ENCODE measurements at regions of chrX and their contacts with region 1.

Region 1: DNA sequence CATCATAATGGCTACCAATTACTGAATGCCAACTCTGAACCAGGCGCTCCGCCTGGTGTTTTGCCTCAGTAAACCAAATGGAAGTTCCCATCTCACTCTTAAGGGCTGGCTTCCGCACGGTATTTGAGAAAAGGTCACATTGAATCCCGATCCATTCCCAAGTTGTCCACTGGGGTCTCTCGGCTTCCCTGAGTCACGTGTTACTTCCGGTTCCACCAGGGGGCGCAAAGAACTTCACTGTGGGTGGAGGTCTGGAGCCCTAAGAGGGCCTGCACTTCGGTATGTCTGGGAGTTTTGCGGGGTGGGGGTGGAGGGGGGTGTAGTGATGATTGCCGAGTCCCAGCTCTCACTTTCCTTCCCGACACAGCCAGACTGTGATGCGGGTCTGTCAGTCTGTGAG is 13.4 kb upstream of the NHS start:
- DNase-seq: peak in 1 of 5 donors; percentile 24
- H3K4me3 ChIP-seq: no peak overlapping the region
- H3K27ac ChIP-seq: no peak overlapping the region
- H3K4me1 ChIP-seq: no peaks in the 10 kb centered on the region
- H3K27me3 ChIP-seq: no peaks in the 10 kb centered on the region
- CTCF ChIP-seq: no peak
- EP300 ChIP-seq: no peak
- POLR2A ChIP-seq: no peak

Region 2: DNA sequence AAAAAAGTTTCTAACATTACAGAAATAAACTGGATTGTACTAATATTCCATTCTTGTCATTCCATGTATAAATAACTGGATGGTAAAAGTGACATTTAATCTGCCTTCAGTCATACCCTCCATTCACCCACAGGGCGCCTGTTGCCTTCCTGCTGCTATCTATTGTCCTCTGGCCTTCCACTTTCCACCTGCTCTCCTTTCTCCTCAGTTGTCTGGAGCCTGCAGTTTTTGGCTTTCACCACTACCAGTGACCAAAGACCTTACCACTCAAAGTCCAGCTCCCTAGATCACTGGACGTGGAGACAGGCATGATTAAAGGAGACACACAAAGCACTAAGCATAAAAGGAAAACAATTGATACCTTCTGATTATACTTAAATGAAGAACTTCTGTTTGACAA is 32.8 kb before region 1 on chrX:
- intact Hi-C with region 1: no loop called
- DNase-seq: no peak
- H3K4me3 ChIP-seq: no peak overlapping the region
- H3K27ac ChIP-seq: no peak overlapping the region
- H3K4me1 ChIP-seq: no peaks in the 10 kb centered on the region
- H3K27me3 ChIP-seq: no peaks in the 10 kb centered on the region
- CTCF ChIP-seq: no peak
- EP300 ChIP-seq: no peak
- POLR2A ChIP-seq: no peak

Region 3: GRCh38 chrX:17413228-17413627 is 51.6 kb after region 1 on chrX:
- intact Hi-C with region 1: no loop called
- DNase-seq: no peak
- H3K4me3 ChIP-seq: no peak overlapping the region
- H3K27ac ChIP-seq: no peak overlapping the region
- H3K4me1 ChIP-seq: no peaks in the 10 kb centered on the region
- H3K27me3 ChIP-seq: no peaks in the 10 kb centered on the region
- CTCF ChIP-seq: no peak
- EP300 ChIP-seq: no peak
- POLR2A ChIP-seq: no peak

Region 4: DNA sequence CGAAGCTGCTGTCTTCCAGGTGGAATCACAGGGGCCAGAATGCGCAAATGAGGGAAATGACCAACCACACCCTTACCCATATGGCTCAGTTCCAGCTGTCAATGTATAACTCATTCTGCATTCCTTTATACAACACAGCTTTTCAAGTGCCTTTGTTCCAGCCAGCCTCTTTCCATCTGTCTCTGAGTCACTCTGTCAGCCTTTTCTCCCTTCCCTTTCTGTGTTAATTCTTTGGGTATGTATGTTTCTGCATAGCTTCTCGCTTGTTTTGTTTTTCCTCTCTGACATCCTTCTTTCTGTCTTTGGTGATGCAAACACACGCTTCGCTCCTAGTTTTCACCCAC is 1255.8 kb after region 1 on chrX:
- intact Hi-C with region 1: loop called in 1 of 4 experiments (anchors 10 kb)
- DNase-seq: no peak
- H3K4me3 ChIP-seq: no peak overlapping the region
- H3K27ac ChIP-seq: no peak overlapping the region
- H3K4me1 ChIP-seq: no peaks in the 10 kb centered on the region
- H3K27me3 ChIP-seq: no peaks in the 10 kb centered on the region
- CTCF ChIP-seq: no peak
- EP300 ChIP-seq: no peak
- POLR2A ChIP-seq: no peak